GM18951 (cell line): ENCODE measurements at regions of chr4 and their contacts with region 1.

Region 1: DNA sequence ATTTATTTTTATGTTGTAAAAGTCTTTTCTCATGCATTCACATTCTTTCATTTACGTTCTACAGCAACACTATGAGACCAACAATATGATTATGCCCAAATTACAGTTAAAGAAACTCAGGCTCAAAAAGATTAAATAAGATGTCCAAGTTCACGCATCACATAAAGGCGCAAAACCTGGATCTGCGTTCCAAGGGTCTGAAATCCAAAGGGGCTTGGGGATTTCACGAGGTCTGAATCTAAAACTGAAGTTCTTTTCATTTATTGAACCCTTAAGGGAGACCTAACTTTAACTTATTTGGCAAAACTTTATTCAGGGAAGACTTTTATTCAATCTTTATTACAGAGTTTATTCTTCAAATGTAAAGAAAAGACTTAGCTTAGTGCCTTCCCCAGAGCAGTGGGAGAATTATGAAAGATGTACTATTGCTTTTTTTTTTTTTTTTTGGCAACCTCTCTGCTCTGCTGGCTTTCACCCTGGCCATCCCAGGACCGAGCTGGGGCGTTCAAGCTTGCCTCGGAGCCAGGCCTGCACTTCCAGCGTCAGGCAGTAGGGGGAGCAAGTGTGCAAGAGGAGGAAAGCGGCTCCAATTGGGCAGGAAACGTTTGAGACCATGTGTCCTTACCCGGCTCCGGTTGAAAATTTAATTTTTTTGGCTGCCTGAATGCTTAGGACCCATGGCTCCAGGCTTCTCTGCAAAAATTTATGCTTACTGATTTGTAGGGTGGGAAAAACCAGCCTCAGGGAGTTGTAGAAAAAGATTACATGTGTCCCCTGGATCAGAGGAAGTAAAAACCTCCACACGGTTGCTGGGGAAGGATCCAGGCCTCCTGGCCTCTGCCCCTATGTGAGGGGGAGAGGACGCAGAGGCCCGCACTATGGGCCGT is 344.3 kb upstream of the KLF3 start:
- POLR2A ChIP-seq: no peak

Region 2: GRCh38 chr4:38237139-38237538 is 82.6 kb before region 1 on chr4:
- in situ Hi-C with region 1: no loop called
- POLR2A ChIP-seq: no peak

Region 3: DNA sequence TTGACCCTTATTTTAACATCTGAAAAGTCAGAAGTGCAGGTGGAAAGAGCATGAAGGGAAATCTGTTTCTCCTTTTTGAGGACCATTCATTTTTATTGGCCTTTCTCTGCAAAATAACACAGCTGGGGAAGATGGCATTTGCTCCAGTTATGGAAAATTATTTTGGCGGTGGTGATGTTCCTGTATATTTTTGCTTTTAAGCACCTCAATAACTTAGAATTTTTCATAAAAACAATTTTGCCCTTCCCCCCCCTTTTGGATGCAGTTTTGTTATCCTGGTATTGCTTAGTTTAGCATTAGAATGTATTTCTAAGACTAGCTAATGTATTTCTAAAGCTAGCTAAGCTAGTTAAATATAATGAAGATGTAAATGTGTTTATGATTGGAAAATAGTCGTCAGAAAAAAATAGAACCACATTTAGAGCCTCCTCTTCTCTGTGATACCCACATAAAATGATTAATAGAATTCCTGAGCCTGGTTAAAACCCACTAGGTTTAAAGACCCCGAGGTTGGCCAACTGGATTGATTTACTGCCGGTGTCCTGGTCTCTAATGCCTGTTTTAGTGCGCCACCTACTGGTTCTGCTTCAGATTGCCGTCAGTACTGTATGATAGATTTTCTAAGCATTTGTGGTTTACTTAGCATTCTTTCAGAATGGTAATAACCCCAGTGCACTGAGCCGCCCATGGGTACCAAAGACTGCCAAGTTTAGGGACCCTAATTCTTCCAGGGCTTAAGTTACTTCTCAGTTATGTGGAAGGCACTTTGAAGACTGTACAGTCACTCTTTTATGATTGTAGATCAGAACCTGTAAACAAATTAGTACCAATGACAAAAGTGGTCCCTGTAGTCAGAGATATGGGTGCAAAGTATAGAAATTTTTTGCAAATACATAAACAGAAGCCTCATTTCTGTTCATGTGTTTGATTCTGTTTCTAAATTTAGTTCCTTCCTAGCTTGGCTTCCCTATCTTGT is 355.7 kb after region 1 on chr4:
- in situ Hi-C with region 1: loop called (anchors 10 kb)
- POLR2A ChIP-seq: no peak

Region 4: GRCh38 chr4:38867478-38868058 is 547.9 kb after region 1 on chr4 and contains the start of gene FAM114A1:
- in situ Hi-C with region 1: loop called (anchors 10 kb)
- POLR2A ChIP-seq: peak; percentile 51